HCT116 (cell line): ENCODE measurements at regions of chr11 and their contacts with region 1.

Region 1: GRCh38 chr11:61747192-61747966 is 5.1 kb upstream of the MYRF start:
- DNase-seq: peak; percentile 48
- ATAC-seq: peak; percentile 83
- H3K4me3 ChIP-seq: no peak overlapping the region
- H3K27ac ChIP-seq: peak overlapping the region; percentile 21; the same call in 1 of the 2 replicates
- H3K4me1 ChIP-seq: peaks cover 6 to 24% of the 10 kb centered on the region in 2 experiments; a peak in 2 of 4 replicates
- H3K27me3 ChIP-seq: no peaks in the 10 kb centered on the region
- CTCF ChIP-seq: peak in 2 of 3 experiments; percentile 85 to 94; a peak in 4 of 6 replicates
- POLR2A ChIP-seq: no peak
- RAD21 ChIP-seq: no peak

Region 2: GRCh38 chr11:61733120-61733978 is 14.0 kb before region 1 on chr11:
- CTCF ChIA-PET with region 1: interaction called, 20 read pairs
- POLR2A ChIA-PET with region 1: interaction called, 3 read pairs
- RAD21 ChIA-PET with region 1: interaction called in 1 of 2 experiments, 4 read pairs
- intact Hi-C with region 1: no loop called
- DNase-seq: peak; percentile 63
- ATAC-seq: peak; percentile 69
- H3K4me3 ChIP-seq: no peak overlapping the region
- H3K27ac ChIP-seq: no peak overlapping the region
- H3K4me1 ChIP-seq: peaks cover 29 to 43% of the 10 kb centered on the region in 2 experiments
- H3K27me3 ChIP-seq: no peaks in the 10 kb centered on the region
- CTCF ChIP-seq: peak; percentile 95 to 99 (median 99)
- POLR2A ChIP-seq: no peak
- RAD21 ChIP-seq: peak; percentile 98

Region 3: GRCh38 chr11:61766353-61766841 is 19.0 kb after region 1 on chr11:
- CTCF ChIA-PET with region 1: interaction called, 11 read pairs
- POLR2A ChIA-PET with region 1: no interaction called
- RAD21 ChIA-PET with region 1: no interaction called
- intact Hi-C with region 1: no loop called
- DNase-seq: no peak
- ATAC-seq: no peak
- H3K4me3 ChIP-seq: no peak overlapping the region
- H3K27ac ChIP-seq: no peak overlapping the region
- H3K4me1 ChIP-seq: peaks cover 8 to 27% of the 10 kb centered on the region in 2 experiments
- H3K27me3 ChIP-seq: no peaks in the 10 kb centered on the region
- CTCF ChIP-seq: no peak
- POLR2A ChIP-seq: no peak
- RAD21 ChIP-seq: no peak

Region 4: GRCh38 chr11:61776551-61777075 is 29.2 kb after region 1 on chr11:
- CTCF ChIA-PET with region 1: interaction called, 8 read pairs
- POLR2A ChIA-PET with region 1: interaction called, 3 read pairs
- RAD21 ChIA-PET with region 1: interaction called, 3 to 8 read pairs
- intact Hi-C with region 1: loop called (anchors 1 kb)
- DNase-seq: peak; percentile 28
- ATAC-seq: peak; percentile 84
- H3K4me3 ChIP-seq: no peak overlapping the region
- H3K27ac ChIP-seq: no peak overlapping the region
- H3K4me1 ChIP-seq: peaks cover 10 to 12% of the 10 kb centered on the region in 2 experiments
- H3K27me3 ChIP-seq: no peaks in the 10 kb centered on the region
- CTCF ChIP-seq: peak; percentile 85 to 95 (median 92)
- POLR2A ChIP-seq: no peak
- RAD21 ChIP-seq: peak; percentile 86

Region 5: DNA sequence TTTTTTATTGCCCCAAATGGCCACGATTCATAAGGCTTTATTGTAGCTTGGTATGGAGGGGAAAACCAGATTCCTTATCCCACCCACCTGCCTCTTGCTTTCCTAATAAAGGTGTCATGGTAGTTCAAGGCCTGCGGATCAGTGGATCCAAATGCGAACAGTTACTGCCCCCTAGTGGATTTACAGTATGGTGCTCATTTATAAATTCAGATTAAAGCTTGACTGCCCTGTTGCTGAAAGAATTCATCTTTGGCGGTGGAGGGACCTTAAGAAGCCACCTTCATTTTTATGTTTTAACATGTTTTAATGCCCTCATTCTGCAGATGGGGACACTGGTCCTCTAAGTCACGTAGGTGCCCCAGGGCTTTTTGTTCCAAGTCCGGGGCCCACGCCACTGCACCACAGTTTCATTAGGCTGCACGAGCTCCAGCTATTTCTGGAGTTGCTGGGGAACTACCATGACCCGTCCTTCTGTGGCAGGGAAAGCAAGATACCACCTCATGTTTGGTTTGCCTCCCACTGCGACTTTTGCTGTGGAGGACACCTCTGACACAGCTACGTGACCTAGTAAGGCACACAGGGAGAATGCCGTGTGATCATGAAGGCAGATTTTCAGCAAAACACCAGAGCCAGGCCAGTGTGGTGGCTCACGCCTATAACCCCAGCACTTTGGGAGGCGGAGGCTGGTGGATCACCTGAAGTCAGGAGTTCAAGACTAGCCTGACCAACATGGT is 360.8 kb after region 1 on chr11:
- CTCF ChIA-PET with region 1: interaction called, 15 read pairs
- POLR2A ChIA-PET with region 1: no interaction called
- RAD21 ChIA-PET with region 1: interaction called in 1 of 2 experiments, 3 read pairs
- intact Hi-C with region 1: loop called (anchors 1 kb)
- DNase-seq: peak; percentile 59
- ATAC-seq: peak; percentile 84
- H3K4me3 ChIP-seq: no peak overlapping the region
- H3K27ac ChIP-seq: no peak overlapping the region
- H3K4me1 ChIP-seq: no peaks in the 10 kb centered on the region; a peak in 1 of 4 replicates
- H3K27me3 ChIP-seq: no peaks in the 10 kb centered on the region
- CTCF ChIP-seq: peak; percentile 68 to 92 (median 88)
- POLR2A ChIP-seq: no peak
- RAD21 ChIP-seq: peak; percentile 95